ENCODE measurements at regions of chr5 and their contacts with region 1.

Region 1: GRCh38 chr5:116084871-116085715 is at the start of gene COMMD10:
- DNase-seq: peak; percentile 76 to 94
- ATAC-seq: peak; percentile 92 to 95 (median 94)
- H3K4me3 ChIP-seq: peak within 1 kb of the TSS; percentile 97
- H3K4me3 Mint-ChIP-seq: peak within 1 kb of the TSS; percentile 93
- H3K27ac ChIP-seq: peak within 1 kb of the TSS; percentile 99
- H3K27ac Mint-ChIP-seq: peak within 1 kb of the TSS; percentile 90 to 95
- H3K4me1 ChIP-seq: peaks cover 15% of the 10 kb centered on the region
- H3K4me1 Mint-ChIP-seq: peaks cover 29 to 36% of the 10 kb centered on the region in 2 donors
- H3K27me3 ChIP-seq: no peaks in the 10 kb centered on the region
- H3K27me3 Mint-ChIP-seq: no peaks in the 10 kb centered on the region
- CTCF ChIP-seq: no peak
- total RNA-seq, gene COMMD10: 28.7 to 41.1 (median 35.1) TPM

Region 2: DNA sequence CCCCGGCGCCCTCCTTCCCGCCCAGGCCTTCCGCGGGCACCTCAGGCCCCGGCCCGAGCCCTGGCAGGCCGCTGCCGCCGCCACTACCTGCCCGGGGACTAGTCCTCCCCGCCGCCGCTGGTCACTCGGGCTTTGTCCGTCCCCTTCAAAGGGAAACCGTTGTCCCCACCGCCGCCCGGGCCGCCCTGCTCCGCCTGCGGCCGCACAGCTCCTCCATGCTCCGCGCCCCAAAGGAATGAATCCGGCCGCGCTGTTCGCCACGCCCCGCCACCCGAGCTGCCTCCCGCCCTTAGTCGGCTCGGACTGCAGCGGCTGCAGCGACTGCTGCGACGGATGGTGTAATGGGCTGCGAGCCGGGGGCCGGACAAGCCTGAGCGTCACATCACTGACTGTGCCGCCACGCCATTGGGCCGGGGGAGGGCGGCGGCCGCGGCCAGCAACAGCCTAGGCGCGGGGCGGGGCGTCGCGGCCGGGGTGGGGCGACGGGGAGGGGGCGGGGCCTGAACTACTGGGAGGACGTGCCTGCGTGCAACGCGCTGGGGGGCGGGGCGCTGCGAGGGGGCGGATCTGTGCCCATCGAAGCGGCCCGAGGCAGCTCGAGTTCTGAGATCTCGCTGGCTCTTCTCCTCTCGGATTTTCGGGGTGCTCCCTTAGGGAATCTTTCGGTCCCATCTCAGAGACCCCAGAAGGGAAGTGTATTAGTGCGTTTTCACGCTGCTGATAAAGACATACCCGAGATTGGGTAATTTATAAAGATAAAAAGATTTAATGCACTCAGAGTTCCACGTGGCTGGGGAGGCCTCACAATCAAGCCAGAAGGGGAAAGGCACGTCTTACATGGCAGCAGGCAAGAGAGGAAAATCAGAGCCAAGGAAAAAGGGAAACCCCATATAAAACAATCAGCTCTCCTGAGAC is 540.4 kb before region 1 on chr5 and contains the start of gene FEM1C:
- intact Hi-C with region 1: loop called (anchors 1 kb)
- DNase-seq: peak; percentile 95
- ATAC-seq: peak; percentile 89 to 96 (median 92)
- H3K4me3 ChIP-seq: peak within 1 kb of the TSS; percentile 58
- H3K4me3 Mint-ChIP-seq: peak within 1 kb of the TSS; percentile 98
- H3K27ac ChIP-seq: peak within 1 kb of the TSS; percentile 98
- H3K27ac Mint-ChIP-seq: peak within 1 kb of the TSS; percentile 93 to 98
- H3K4me1 ChIP-seq: peaks cover 13% of the 10 kb centered on the region
- H3K4me1 Mint-ChIP-seq: peaks cover 48 to 54% of the 10 kb centered on the region in 2 donors
- H3K27me3 ChIP-seq: no peaks in the 10 kb centered on the region
- H3K27me3 Mint-ChIP-seq: no peaks in the 10 kb centered on the region
- CTCF ChIP-seq: no peak
- total RNA-seq, gene FEM1C: 33.8 to 48.6 (median 36.2) TPM

Region 3: GRCh38 chr5:115977988-115978387 is 107.1 kb before region 1 on chr5:
- intact Hi-C with region 1: no loop called
- DNase-seq: no peak
- ATAC-seq: no peak
- H3K4me3 ChIP-seq: no peak overlapping the region
- H3K4me3 Mint-ChIP-seq: no peak overlapping the region
- H3K27ac ChIP-seq: no peak overlapping the region
- H3K27ac Mint-ChIP-seq: no peak overlapping the region
- H3K4me1 ChIP-seq: no peaks in the 10 kb centered on the region
- H3K4me1 Mint-ChIP-seq: peaks cover 10 to 13% of the 10 kb centered on the region in 2 donors
- H3K27me3 ChIP-seq: no peaks in the 10 kb centered on the region
- H3K27me3 Mint-ChIP-seq: peaks cover 14 to 78% of the 10 kb centered on the region in 2 donors
- CTCF ChIP-seq: no peak

Measured in natural killer cell (primary cell).